ENCODE measurements at regions of chr6 and their contacts with region 1.

Region 1: GRCh38 chr6:25962149-25963127 is at the start of gene TRIM38:
- DNase-seq: peak; percentile 76
- H3K4me3 Mint-ChIP-seq: peak within 1 kb of the TSS; percentile 94
- H3K27ac Mint-ChIP-seq: peak within 1 kb of the TSS; percentile 95
- H3K4me1 Mint-ChIP-seq: peaks cover 85% of the 10 kb centered on the region
- H3K27me3 Mint-ChIP-seq: no peaks in the 10 kb centered on the region
- total RNA-seq, gene TRIM38: 24.5 and 25.3 TPM in 2 replicates

Region 2: DNA sequence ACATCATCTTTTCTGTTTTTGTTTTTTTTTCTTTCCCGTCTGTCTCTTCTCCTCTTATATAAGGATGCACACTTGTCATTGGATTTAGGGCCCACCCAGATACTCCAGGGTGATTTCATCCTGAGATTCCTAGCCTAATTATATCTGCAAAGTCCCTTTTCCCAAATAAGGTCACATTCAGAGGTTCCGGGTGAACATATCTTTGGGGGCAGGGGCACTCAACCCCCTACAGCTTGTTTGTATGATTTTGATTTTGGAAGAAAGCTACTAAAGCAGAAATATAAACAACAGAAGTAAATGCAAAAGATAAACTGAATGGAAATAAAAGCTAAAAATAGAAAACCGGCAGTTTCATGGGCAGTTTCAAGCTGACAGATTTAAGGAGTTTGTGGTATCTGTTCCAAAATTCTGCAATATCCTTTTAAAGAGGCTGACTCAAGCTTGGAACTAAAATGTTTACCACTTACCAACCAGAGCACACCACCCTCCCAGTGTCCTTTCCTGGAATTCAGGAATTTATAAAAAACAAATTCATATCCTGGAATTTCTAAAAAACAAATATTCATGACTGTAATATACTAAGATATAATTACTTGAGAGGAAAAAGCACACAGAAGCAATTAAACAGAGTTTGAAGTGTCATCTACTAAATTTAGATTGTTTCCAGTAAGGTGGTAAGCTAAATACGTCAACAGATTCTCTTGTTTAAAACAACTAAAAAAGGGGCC is 783.2 kb before region 1 on chr6:
- intact Hi-C with region 1: loop called (anchors 1 kb)
- DNase-seq: no peak
- H3K4me3 Mint-ChIP-seq: peak overlapping the region; percentile 70
- H3K27ac Mint-ChIP-seq: peak overlapping the region; percentile 93
- H3K4me1 Mint-ChIP-seq: peaks cover 90% of the 10 kb centered on the region
- H3K27me3 Mint-ChIP-seq: no peaks in the 10 kb centered on the region

Region 3: DNA sequence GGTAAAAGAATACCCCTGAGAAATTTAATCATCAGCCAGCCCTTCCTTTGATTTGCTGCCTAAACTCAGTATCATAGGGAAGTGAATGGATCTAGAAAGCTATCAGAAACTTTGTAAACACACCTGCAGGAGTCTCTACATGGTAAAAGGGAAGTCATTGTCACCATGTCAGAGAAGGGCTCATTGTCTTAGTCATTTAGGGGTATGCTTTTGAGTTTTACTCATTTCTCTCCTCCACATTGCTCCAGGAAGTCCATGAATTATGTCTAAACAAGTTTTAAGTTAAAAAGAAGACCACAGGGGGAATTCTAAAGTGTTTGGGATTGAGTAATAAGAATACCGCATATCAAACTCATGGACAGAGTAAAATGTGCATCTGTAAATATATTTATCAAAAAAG is 133.1 kb before region 1 on chr6:
- intact Hi-C with region 1: loop called (anchors 5 kb)
- DNase-seq: no peak
- H3K4me3 Mint-ChIP-seq: no peak overlapping the region
- H3K27ac Mint-ChIP-seq: no peak overlapping the region
- H3K4me1 Mint-ChIP-seq: peaks cover 11% of the 10 kb centered on the region
- H3K27me3 Mint-ChIP-seq: peaks cover 5% of the 10 kb centered on the region

Region 4: GRCh38 chr6:25913741-25914140 is 48.7 kb before region 1 on chr6:
- intact Hi-C with region 1: loop called (anchors 5 kb)
- DNase-seq: no peak
- H3K4me3 Mint-ChIP-seq: no peak overlapping the region
- H3K27ac Mint-ChIP-seq: peak overlapping the region; percentile 81
- H3K4me1 Mint-ChIP-seq: peaks cover 21% of the 10 kb centered on the region
- H3K27me3 Mint-ChIP-seq: no peaks in the 10 kb centered on the region

Region 5: DNA sequence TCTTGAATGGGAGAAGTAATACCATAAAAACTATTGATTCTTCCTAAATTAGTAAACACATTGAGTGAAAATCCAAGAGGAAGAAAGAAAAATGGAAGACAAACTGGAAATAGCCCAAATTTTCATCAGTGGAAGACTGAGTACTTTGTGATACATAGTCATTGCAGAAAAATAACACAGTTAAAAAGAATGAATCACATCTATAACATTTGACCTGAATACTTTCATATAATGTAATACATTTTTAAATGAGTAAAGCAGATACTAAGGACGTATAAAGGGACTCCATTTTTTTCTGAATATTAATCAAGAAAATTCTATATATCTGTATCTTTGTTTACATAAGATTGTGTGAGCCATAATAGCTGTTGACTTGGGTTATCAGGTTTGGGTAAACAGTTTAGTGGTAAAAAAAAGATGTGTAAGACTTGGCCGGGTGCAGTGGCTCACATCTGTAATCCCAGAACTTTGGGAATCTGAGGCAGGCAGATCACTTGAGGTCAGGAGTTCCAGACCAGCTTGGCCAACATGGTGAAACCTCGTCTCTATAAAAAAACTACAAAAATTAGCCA is 27.6 kb before region 1 on chr6:
- intact Hi-C with region 1: no loop called
- DNase-seq: no peak
- H3K4me3 Mint-ChIP-seq: no peak overlapping the region
- H3K27ac Mint-ChIP-seq: no peak overlapping the region
- H3K4me1 Mint-ChIP-seq: no peaks in the 10 kb centered on the region
- H3K27me3 Mint-ChIP-seq: no peaks in the 10 kb centered on the region

Region 6: DNA sequence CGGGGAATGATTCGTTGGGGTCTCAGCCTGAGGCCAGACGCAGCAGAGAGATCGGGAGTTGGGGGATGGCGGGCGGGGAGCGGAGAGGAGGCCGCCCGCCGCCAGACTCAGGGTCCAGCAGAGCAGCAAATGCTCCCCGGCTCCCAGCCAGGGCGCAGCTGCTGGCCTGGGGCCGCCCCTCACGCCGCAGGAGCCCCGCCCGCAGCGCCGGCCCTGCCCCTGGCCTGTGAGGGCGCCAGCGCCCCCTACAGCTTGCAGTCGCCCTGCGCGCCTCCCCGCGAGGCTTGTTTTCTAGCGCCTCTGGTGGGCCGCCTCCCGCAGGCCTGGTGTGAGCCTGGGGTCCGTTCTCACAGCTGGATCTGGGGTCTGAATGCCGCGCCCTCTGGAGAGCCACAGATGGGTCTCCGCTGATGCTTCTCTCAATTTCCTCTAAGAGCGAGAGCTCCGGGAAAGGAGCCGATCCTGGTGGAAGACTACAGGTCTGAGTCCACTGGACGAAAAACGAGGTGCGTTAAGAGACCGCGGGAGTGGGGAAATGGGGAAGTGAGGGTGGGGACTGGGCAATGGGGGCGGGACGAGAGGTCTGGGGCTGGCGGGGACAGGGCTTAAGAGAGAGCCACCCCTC is 30.1 kb after region 1 on chr6:
- intact Hi-C with region 1: loop called (anchors 1 kb)
- DNase-seq: peak; percentile 91
- H3K4me3 Mint-ChIP-seq: peak overlapping the region; percentile 95
- H3K27ac Mint-ChIP-seq: peak overlapping the region; percentile 94
- H3K4me1 Mint-ChIP-seq: peaks cover 37% of the 10 kb centered on the region
- H3K27me3 Mint-ChIP-seq: no peaks in the 10 kb centered on the region

Region 7: DNA sequence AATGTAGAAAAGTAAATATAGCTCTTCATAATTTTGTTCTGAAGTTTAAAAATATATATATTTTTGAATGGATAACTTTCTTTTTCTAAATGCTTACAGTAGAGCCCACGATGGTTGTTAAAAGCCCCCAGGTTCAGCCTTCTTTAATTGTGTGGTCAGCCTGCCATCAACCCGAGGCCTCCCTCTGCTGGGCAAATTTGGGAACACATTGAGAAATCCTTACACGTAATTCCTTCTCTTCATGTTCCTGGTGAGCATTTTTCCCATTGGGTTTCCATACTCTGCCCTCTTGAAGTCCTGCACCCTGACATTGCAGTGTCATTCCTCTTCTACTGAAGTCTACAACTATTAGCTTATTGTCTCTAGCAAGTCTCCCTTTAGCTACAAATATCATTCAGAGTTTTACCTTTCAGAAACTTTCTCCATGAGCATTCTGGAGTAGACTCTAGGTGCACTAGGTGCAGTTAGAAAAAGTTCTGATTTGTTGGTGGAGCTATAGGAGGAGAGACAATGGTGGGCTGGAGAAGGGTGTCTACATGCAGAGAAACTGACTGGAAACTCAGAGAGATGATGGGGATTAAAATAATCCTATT is 40.8 kb after region 1 on chr6:
- intact Hi-C with region 1: no loop called
- DNase-seq: no peak
- H3K4me3 Mint-ChIP-seq: no peak overlapping the region
- H3K27ac Mint-ChIP-seq: no peak overlapping the region
- H3K4me1 Mint-ChIP-seq: peaks cover 13% of the 10 kb centered on the region
- H3K27me3 Mint-ChIP-seq: no peaks in the 10 kb centered on the region

Region 8: GRCh38 chr6:26045065-26045927 is 82.9 kb after region 1 on chr6:
- intact Hi-C with region 1: no loop called
- DNase-seq: peak; percentile 82
- H3K4me3 Mint-ChIP-seq: peak overlapping the region; percentile 86
- H3K27ac Mint-ChIP-seq: peak overlapping the region; percentile 98
- H3K4me1 Mint-ChIP-seq: peaks cover 49% of the 10 kb centered on the region
- H3K27me3 Mint-ChIP-seq: no peaks in the 10 kb centered on the region